Activated CD4-positive, alpha-beta memory T cell treated with anti-CD3 and anti-CD28 coated beads for 36 hours (primary cell): ENCODE measurements at regions of chr1 and their contacts with region 1.

Region 1: GRCh38 chr1:109643385-109644230 is 12.3 kb upstream of the GSTM4 start:
- DNase-seq: peak; percentile 93
- H3K4me3 Mint-ChIP-seq: no peak overlapping the region
- H3K27ac Mint-ChIP-seq: no peak overlapping the region
- H3K4me1 Mint-ChIP-seq: peaks cover 3% of the 10 kb centered on the region
- H3K27me3 Mint-ChIP-seq: no peaks in the 10 kb centered on the region

Region 2: GRCh38 chr1:109548321-109549267 is 95.0 kb before region 1 on chr1 and contains the start of gene GNAI3:
- CTCF ChIA-PET with region 1: interaction called, 130 read pairs
- POLR2A ChIA-PET with region 1: interaction called, 10 read pairs
- intact Hi-C with region 1: loop called (anchors 1 kb)
- DNase-seq: peak; percentile 98
- H3K4me3 Mint-ChIP-seq: peak within 1 kb of the TSS; percentile 86
- H3K27ac Mint-ChIP-seq: peak within 1 kb of the TSS; percentile 94
- H3K4me1 Mint-ChIP-seq: peaks cover 41% of the 10 kb centered on the region
- H3K27me3 Mint-ChIP-seq: no peaks in the 10 kb centered on the region
- total RNA-seq, gene GNAI3: 9.2 to 9.9 TPM

Region 3: DNA sequence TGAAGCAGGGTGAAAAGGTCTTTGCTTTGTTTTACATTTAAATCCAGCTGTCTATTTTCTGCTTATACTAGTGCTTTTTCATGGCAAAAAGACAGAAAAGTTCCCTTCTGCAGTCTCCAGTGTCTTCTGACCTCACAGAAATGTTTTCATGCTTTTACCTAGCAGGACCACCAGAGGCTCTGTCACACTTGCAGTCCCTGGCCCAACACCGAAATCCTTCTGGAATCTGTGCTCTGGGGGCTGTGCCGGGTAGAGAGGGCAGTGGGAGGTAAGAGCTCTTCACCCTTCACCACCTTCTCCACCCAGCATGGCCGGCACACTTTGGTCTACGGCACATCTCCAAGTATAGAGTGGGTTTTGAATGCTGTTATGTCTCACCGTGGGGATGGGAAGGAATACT is 45.0 kb before region 1 on chr1:
- CTCF ChIA-PET with region 1: interaction called, 20 read pairs
- POLR2A ChIA-PET with region 1: no interaction called
- intact Hi-C with region 1: no loop called
- DNase-seq: no peak
- H3K4me3 Mint-ChIP-seq: no peak overlapping the region
- H3K27ac Mint-ChIP-seq: no peak overlapping the region
- H3K4me1 Mint-ChIP-seq: peaks cover 22% of the 10 kb centered on the region
- H3K27me3 Mint-ChIP-seq: no peaks in the 10 kb centered on the region

Region 4: DNA sequence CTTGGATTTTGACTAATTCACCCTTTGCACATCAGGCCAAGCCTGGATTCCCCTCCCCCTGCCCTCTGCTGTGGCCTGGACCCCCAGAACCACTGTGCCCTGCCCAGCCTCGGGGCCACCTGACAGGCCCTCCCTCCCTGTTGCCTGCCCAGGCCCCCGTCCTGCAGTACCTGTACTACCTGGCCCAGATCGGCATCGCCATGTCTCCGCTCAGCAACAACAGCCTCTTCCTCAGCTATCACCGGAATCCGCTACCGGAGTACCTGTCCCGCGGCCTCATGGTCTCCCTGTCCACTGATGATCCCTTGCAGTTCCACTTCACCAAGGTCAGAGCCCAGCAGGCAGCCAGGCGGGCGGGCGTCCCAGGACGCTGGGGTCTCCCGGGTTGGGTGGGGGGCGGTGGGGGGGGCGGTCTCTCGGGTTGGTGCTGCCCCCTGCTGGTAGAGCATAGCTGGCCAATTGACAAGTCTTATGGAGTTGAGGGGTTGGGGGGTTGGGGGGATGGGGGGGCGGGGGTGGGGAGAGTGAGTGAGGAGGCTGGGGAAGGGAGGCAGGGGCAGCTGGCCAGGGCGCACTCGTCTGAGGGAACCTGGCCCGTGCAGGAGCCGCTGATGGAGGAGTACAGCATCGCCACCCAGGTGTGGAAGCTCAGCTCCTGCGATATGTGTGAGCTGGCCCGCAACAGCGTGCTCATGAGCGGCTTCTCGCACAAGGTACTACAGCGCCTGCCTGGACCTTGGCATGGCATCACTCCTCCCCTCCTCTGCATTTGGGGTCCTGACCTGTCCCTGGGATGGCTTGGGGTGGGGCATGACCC is 13.3 kb before region 1 on chr1:
- CTCF ChIA-PET with region 1: interaction called, 61 read pairs
- POLR2A ChIA-PET with region 1: interaction called, 3 read pairs
- intact Hi-C with region 1: no loop called
- DNase-seq: peak; percentile 51
- H3K4me3 Mint-ChIP-seq: no peak overlapping the region
- H3K27ac Mint-ChIP-seq: no peak overlapping the region
- H3K4me1 Mint-ChIP-seq: peaks cover 12% of the 10 kb centered on the region
- H3K27me3 Mint-ChIP-seq: no peaks in the 10 kb centered on the region

Region 5: DNA sequence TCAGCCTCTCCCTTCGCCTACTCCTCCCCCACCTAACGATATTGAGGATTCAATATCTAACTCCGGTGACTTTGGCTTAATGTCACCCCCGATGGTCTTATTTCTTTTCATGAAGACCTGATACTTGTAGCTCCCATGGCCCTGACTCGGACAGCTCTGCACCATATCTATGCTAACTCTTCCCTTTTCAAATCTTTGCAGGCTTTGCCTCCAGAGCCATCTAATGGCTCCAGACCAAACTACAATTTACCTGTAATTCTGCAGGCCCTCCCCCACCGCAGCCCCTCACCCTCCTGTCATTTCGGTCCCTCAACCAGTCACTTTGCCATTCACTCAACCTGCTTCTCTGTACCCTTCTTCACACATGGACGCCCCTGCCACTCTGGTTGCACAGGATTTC is 60.6 kb after region 1 on chr1:
- CTCF ChIA-PET with region 1: interaction called, 12 read pairs
- POLR2A ChIA-PET with region 1: no interaction called
- intact Hi-C with region 1: no loop called
- DNase-seq: no peak
- H3K4me3 Mint-ChIP-seq: no peak overlapping the region
- H3K27ac Mint-ChIP-seq: no peak overlapping the region
- H3K4me1 Mint-ChIP-seq: no peaks in the 10 kb centered on the region
- H3K27me3 Mint-ChIP-seq: peaks cover 9% of the 10 kb centered on the region

Region 6: DNA sequence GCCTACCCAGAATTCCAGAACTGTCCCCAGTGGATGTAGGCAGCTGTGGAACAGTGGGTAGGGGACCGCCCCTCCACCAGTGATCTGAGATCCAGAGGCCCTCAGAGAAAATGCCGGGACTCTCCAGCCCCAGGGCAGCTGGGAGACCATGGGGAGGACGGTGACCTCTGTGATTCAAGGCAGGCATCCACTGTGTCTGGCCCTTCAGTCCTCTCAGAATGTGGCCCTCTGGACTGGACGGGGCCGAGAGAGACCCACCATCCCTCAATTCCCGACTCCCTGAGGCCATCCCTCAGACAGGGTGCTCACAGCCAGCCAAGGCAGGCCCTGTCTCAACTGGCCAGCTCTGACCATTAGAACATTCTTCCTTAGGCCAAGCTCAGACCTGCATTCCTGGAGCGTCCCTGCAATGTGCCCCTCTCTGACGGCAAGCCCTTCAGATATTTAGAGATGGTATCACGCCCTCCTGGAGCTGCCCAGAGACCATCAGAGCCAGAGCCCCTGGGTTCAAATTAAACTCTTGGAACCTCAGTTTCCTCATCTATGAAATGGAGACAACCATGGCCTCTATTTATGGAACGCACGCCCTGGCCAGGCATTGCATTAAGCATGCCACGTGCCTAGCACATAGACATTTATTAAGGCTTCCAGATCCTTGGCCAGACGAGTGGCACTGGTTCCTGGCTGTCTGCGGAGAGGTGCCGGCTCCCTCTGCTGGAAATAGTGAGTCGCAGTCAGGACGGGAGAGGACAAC is 129.7 kb after region 1 on chr1:
- CTCF ChIA-PET with region 1: interaction called, 242 read pairs
- POLR2A ChIA-PET with region 1: no interaction called
- intact Hi-C with region 1: loop called (anchors 1 kb)
- DNase-seq: peak; percentile 83
- H3K4me3 Mint-ChIP-seq: no peak overlapping the region
- H3K27ac Mint-ChIP-seq: no peak overlapping the region
- H3K4me1 Mint-ChIP-seq: peaks cover 4% of the 10 kb centered on the region
- H3K27me3 Mint-ChIP-seq: no peaks in the 10 kb centered on the region